Mammary epithelial cell (primary cell): ENCODE measurements at regions of chr6 and their contacts with region 1.

Region 1: GRCh38 chr6:31114970-31115849 is 610 bp downstream of the PSORS1C1 start:
- DNase-seq: peak; percentile 24
- H3K4me3 ChIP-seq: peak overlapping the region; percentile 31 to 52 (median 39)
- H3K27ac ChIP-seq: peak overlapping the region; percentile 91
- H3K4me1 ChIP-seq: peaks cover 39% of the 10 kb centered on the region
- H3K27me3 ChIP-seq: no peaks in the 10 kb centered on the region
- CTCF ChIP-seq: peak in 1 of 2 donors; percentile 52

Region 2: GRCh38 chr6:30821862-30822782 is 293.1 kb before region 1 on chr6:
- CTCF ChIA-PET with region 1: interaction called, 17 read pairs
- dilution Hi-C with region 1: loop called (anchors 10 kb)
- in situ Hi-C with region 1: no loop called
- intact Hi-C with region 1: no loop called
- DNase-seq: peak; percentile 64
- H3K4me3 ChIP-seq: peak overlapping the region in 1 of 3 experiments; percentile 10
- H3K27ac ChIP-seq: peak overlapping the region; percentile 84
- H3K4me1 ChIP-seq: peaks cover 49% of the 10 kb centered on the region
- H3K27me3 ChIP-seq: no peaks in the 10 kb centered on the region
- CTCF ChIP-seq: peak; percentile 44 to 59

Region 3: DNA sequence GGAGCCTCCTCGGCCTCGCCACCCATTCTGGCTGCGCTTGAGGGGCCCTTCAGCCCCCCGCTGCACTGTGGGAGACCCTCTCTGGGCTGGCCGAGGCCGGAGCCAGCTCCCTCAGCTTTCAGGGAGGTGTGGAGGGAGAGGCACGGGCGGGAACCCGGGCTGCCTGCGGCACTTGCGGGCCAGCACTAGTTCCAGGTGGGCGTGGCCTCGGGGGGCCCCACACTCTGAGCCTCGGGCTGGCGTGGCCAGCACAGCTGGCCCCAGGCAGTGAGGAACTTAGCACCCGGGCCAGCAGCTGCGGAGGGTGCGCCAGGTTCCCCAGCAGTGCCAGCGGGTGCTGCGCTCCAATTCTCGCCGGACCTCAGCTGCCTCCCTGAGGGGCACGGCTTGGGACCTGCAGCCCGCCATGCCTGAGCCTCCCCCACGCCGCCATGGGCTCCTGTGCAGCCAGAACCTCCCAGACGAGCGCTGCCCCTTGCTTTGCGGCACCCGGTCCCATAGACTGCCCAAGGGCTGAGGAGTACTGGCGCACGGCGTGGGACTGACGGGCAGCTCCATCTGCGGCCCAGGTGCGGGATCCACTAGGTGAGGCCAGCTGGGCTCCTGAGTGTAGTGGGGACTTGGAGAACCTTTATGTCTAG is 98.4 kb before region 1 on chr6:
- CTCF ChIA-PET with region 1: no interaction called
- dilution Hi-C with region 1: loop called (anchors 5 kb)
- in situ Hi-C with region 1: no loop called
- intact Hi-C with region 1: no loop called
- DNase-seq: no peak
- H3K4me3 ChIP-seq: no peak overlapping the region
- H3K27ac ChIP-seq: no peak overlapping the region
- H3K4me1 ChIP-seq: no peaks in the 10 kb centered on the region
- H3K27me3 ChIP-seq: no peaks in the 10 kb centered on the region
- CTCF ChIP-seq: no peak

Region 4: DNA sequence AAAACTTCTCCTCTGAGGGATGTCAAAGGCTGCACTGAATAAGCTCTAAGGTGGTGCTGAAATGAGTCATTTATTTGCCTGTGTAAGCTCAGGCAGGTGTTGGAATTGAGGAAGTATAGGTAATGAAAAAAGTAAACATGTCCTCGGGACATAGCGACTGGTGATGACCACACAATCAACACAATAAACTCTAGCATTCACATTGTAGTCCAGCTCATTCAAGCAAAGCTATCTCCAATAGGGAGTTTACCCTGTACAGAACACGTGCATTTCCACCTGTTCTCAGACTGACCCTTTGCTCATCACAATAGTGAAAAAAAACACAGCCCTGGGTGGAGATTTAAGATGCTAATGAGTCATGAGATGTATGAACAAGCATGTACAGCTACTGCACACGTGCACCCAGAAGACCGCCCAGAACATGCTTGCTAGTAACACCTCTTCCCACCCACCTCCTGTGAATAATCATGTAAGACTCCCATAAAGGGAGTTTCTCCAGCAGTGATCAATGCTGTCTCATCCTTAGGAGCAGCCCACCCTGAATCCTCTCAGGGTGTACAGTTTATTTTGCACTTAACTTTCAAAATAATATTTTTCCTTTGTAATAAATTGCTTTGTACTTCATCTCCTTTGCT is 88.3 kb after region 1 on chr6:
- CTCF ChIA-PET with region 1: no interaction called
- dilution Hi-C with region 1: loop called (anchors 5 kb)
- in situ Hi-C with region 1: no loop called
- intact Hi-C with region 1: no loop called
- DNase-seq: peak; percentile 85
- H3K4me3 ChIP-seq: peak overlapping the region; percentile 45 to 66 (median 49)
- H3K27ac ChIP-seq: peak overlapping the region; percentile 90
- H3K4me1 ChIP-seq: peaks cover 21% of the 10 kb centered on the region
- H3K27me3 ChIP-seq: no peaks in the 10 kb centered on the region
- CTCF ChIP-seq: no peak